B cell (primary cell): ENCODE measurements at regions of chr12 and their contacts with region 1.

Region 1: DNA sequence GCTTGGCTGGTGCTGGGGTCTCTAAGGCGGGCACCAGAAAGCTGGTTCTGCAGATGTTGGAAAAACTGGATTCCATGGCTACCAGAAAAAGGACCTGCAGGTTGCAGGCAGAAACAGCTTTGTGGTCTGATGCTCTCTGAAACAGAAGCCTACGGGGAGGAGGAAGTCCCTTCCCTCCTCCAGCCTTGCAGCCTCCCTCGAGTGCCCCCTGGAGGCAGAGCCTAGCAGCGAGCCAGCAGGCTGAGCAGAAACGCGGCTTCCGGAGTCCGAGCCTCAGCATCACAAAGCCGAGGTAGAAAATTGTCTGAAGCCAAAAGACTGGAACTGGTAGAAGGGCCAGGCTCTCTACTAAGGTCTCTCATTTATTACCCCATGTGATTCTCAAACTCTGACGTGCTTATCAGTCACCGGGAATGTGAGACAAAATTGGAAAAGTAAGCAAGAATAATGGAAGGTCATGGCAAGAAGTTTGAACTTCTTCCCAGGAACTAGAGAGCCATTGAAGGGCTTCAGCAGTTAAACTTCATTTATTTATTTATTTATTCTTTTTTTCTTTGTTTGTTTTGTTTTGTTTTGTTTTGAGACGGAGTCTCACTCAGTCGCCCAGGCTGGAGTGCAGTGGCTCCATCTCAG is 82.2 kb upstream of the CPSF6 start:
- DNase-seq: peak; percentile 88
- ATAC-seq: peak; percentile 100
- H3K4me3 ChIP-seq: peak overlapping the region in 2 of 5 experiments; percentile 17 to 35
- H3K4me3 Mint-ChIP-seq: peak overlapping the region; percentile 69
- H3K27ac ChIP-seq: no peak overlapping the region
- H3K27ac Mint-ChIP-seq: peak overlapping the region; percentile 64
- H3K4me1 ChIP-seq: peaks cover 3 to 7% of the 10 kb centered on the region in 2 donors
- H3K4me1 Mint-ChIP-seq: peaks cover 12% of the 10 kb centered on the region
- H3K27me3 ChIP-seq: no peaks in the 10 kb centered on the region
- H3K27me3 Mint-ChIP-seq: no peaks in the 10 kb centered on the region
- CTCF ChIP-seq: peak; percentile 96

Region 2: DNA sequence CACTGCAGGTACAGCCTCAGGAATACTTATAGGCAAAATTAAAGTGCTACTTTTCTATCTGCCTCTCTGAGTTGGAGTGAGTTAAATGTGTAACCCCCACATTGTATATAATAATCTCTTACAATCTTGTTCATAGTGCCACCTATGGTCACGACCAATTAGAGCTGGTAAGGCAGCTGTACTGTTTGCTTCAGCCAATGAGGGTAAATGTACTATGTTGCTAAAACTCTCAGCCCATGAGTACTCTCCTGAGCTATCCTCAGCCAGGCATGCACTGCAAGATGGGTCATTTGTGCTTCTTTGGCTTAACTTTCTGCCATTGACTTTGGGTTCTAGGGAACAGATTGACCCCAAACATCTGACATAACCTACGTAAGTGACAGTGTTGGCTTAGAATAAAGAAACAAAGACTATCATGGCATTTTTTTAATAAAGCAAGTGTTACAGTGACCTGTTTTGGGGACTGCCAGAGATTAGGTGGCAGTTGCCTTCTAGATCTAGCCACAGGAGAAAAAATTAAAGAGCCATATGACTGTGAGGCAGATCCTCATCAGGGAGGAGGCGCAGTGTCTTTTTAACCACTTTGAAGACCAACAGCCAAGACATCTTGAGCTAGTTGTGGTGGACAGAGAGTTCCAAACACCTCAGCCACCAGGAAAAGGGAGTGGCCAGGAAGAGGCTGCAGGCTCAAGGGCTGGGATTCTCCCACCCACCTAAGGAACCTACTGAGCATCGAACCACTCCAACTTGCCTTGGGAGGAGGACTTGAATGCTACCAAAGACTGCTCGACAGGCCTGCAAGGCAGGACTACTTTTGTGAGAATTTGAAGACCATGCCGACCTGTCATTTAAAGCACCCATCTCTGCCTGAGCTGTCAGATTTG is 363.9 kb before region 1 on chr12:
- CTCF ChIA-PET with region 1: no interaction called
- POLR2A ChIA-PET with region 1: no interaction called
- intact Hi-C with region 1: no loop called
- DNase-seq: peak; percentile 64
- ATAC-seq: peak; percentile 86
- H3K4me3 ChIP-seq: no peak overlapping the region
- H3K4me3 Mint-ChIP-seq: no peak overlapping the region
- H3K27ac ChIP-seq: no peak overlapping the region
- H3K27ac Mint-ChIP-seq: no peak overlapping the region
- H3K4me1 ChIP-seq: no peaks in the 10 kb centered on the region
- H3K4me1 Mint-ChIP-seq: peaks cover 5% of the 10 kb centered on the region
- H3K27me3 ChIP-seq: no peaks in the 10 kb centered on the region
- H3K27me3 Mint-ChIP-seq: no peaks in the 10 kb centered on the region
- CTCF ChIP-seq: no peak

Region 3: DNA sequence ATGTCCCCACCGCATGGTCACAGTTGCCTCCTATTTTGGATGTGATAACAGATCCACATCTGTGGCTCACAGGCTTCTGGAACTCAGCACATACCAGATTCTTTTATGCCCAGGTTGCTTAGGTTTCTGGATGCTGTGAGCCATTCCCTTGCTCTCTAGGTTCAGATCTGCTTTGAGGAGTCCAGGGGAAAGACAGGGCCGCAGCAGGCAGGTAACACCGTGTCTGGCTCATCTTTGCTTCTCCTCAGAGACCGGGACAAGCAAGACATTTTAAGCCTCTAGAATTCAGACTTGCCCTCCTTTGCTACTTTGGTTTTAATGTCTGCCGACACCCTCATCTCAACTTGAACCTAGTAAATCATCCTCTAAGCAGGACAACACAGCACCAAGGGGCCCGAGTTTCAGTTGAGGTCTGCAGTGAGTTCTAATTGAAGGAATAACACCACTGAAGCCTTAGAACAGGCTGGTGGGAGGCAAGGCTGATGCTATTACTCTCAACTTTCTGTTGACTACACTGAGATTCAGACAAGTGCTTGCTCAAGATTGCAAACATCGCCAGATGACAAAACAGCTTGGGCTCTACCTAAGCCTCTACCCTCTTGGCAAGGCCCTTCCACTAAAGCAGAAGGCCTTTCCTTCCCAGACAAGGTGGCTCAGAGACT is 293.9 kb before region 1 on chr12:
- CTCF ChIA-PET with region 1: interaction called, 5 read pairs
- POLR2A ChIA-PET with region 1: no interaction called
- intact Hi-C with region 1: loop called (anchors 5 kb)
- DNase-seq: peak; percentile 8
- ATAC-seq: no peak
- H3K4me3 ChIP-seq: no peak overlapping the region
- H3K4me3 Mint-ChIP-seq: no peak overlapping the region
- H3K27ac ChIP-seq: no peak overlapping the region
- H3K27ac Mint-ChIP-seq: no peak overlapping the region
- H3K4me1 ChIP-seq: peaks cover 0 to 6% of the 10 kb centered on the region in 2 donors
- H3K4me1 Mint-ChIP-seq: peaks cover 14% of the 10 kb centered on the region
- H3K27me3 ChIP-seq: no peaks in the 10 kb centered on the region
- H3K27me3 Mint-ChIP-seq: no peaks in the 10 kb centered on the region
- CTCF ChIP-seq: no peak

Region 4: GRCh38 chr12:69254046-69254445 is 96.9 kb after region 1 on chr12:
- CTCF ChIA-PET with region 1: interaction called, 84 read pairs
- POLR2A ChIA-PET with region 1: no interaction called
- intact Hi-C with region 1: loop called (anchors 1 kb)
- DNase-seq: peak; percentile 69
- ATAC-seq: peak; percentile 43
- H3K4me3 ChIP-seq: no peak overlapping the region
- H3K4me3 Mint-ChIP-seq: no peak overlapping the region
- H3K27ac ChIP-seq: peak overlapping the region in 1 of 2 donors; percentile 72
- H3K27ac Mint-ChIP-seq: peak overlapping the region; percentile 51
- H3K4me1 ChIP-seq: peaks cover 4 to 18% of the 10 kb centered on the region in 2 donors
- H3K4me1 Mint-ChIP-seq: peaks cover 40% of the 10 kb centered on the region
- H3K27me3 ChIP-seq: no peaks in the 10 kb centered on the region
- H3K27me3 Mint-ChIP-seq: no peaks in the 10 kb centered on the region
- CTCF ChIP-seq: peak; percentile 74

Region 5: DNA sequence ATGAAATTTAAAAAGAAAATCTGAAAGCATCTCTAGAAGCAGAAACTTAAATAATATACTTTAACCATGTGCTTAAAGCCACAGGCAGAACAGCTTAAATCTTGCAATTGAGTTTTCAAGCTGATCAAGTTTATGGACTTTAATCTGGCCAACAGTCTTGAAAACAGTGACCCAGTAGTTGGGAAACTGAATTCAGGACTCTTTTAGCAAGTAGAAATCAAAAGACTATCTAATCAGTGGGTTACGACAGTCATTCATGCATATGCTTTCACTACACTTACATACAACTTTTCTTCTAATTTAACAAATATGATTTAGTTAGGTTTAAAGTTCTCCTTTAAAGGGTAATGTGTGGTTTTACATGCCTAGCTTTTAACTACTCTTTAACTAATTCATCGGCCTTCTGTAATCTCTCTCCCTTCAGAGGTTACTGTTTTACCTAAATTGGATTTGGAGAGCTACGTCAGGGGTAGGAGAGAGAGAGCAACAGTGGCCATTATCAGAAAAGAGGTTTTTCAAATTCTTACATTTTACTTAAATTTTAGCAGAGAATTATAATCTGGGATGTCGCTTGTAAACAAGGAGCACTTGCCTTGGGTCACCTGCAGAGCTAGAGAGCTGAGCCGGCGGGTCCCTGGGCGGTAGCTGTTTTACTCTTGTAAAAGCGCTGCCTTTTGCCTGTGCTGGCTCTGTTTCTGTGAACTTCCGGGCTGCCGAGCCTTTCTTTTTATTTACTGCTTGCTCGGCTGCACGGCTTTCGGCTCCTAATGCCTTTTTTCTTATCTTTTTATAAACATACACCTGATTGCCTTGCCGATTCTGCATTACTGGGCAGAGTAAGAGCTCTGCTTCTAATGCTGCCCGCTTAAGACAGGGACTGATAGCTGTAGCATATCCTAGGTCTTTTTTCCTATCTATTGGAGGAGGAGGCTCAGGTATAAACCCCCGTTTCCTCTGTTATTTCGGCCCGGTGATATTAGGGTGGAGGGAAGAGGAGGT is 173.6 kb after region 1 on chr12:
- CTCF ChIA-PET with region 1: no interaction called
- POLR2A ChIA-PET with region 1: no interaction called
- intact Hi-C with region 1: loop called (anchors 1 kb)
- DNase-seq: peak; percentile 62
- ATAC-seq: peak; percentile 77
- H3K4me3 ChIP-seq: peak overlapping the region; percentile 46 to 74 (median 65)
- H3K4me3 Mint-ChIP-seq: peak overlapping the region; percentile 91
- H3K27ac ChIP-seq: peak overlapping the region; percentile 83 to 86
- H3K27ac Mint-ChIP-seq: peak overlapping the region; percentile 93
- H3K4me1 ChIP-seq: peaks cover 15 to 20% of the 10 kb centered on the region in 2 donors
- H3K4me1 Mint-ChIP-seq: peaks cover 23% of the 10 kb centered on the region
- H3K27me3 ChIP-seq: no peaks in the 10 kb centered on the region
- H3K27me3 Mint-ChIP-seq: no peaks in the 10 kb centered on the region
- CTCF ChIP-seq: no peak

Region 6: GRCh38 chr12:69585189-69586062 is 428.3 kb after region 1 on chr12 and contains the start of gene CCT2:
- CTCF ChIA-PET with region 1: no interaction called
- POLR2A ChIA-PET with region 1: no interaction called
- intact Hi-C with region 1: loop called (anchors 5 kb)
- DNase-seq: peak; percentile 98
- ATAC-seq: peak; percentile 93
- H3K4me3 ChIP-seq: peak within 1 kb of the TSS; percentile 83 to 96 (median 90)
- H3K4me3 Mint-ChIP-seq: peak within 1 kb of the TSS; percentile 97
- H3K27ac ChIP-seq: peak within 1 kb of the TSS; percentile 91 to 97
- H3K27ac Mint-ChIP-seq: peak within 1 kb of the TSS; percentile 96
- H3K4me1 ChIP-seq: peaks cover 6 to 11% of the 10 kb centered on the region in 2 donors
- H3K4me1 Mint-ChIP-seq: peaks cover 12% of the 10 kb centered on the region
- H3K27me3 ChIP-seq: no peaks in the 10 kb centered on the region
- H3K27me3 Mint-ChIP-seq: no peaks in the 10 kb centered on the region
- CTCF ChIP-seq: peak; percentile 60
- total RNA-seq, gene CCT2: 125 TPM in 2 replicates

Region 7: GRCh38 chr12:69639400-69640016 is 482.4 kb after region 1 on chr12:
- CTCF ChIA-PET with region 1: interaction called, 21 read pairs
- POLR2A ChIA-PET with region 1: no interaction called
- intact Hi-C with region 1: no loop called
- DNase-seq: peak; percentile 69
- ATAC-seq: peak; percentile 67
- H3K4me3 ChIP-seq: no peak overlapping the region
- H3K4me3 Mint-ChIP-seq: no peak overlapping the region
- H3K27ac ChIP-seq: no peak overlapping the region
- H3K27ac Mint-ChIP-seq: no peak overlapping the region
- H3K4me1 ChIP-seq: no peaks in the 10 kb centered on the region
- H3K4me1 Mint-ChIP-seq: no peaks in the 10 kb centered on the region
- H3K27me3 ChIP-seq: no peaks in the 10 kb centered on the region
- H3K27me3 Mint-ChIP-seq: no peaks in the 10 kb centered on the region
- CTCF ChIP-seq: peak; percentile 91